ENCODE measurements at regions of chr2 and their contacts with region 1.

Region 1: GRCh38 chr2:73176881-73177644 is 25.3 kb upstream of the NOTO start:
- DNase-seq: no peak
- H3K4me3 ChIP-seq: peak overlapping the region; percentile 71
- CTCF ChIP-seq: peak; percentile 100

Region 2: DNA sequence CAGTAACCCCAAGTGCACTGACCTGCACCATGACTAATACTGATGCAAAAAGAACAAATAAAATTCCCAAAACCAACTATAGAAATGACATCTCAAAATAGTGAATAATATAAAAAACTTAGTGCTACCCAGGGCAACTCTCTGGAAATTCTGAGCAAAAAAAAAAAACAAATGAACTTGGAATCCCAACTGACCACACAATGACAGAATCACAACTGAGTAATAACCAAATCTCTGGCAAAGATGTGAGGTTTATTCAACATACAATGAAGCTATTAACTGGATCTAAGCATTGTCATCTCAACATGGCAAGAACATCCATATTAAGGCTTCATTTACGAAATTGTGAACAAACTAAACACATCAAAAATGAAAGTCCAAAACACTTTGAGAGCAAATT is 373.9 kb before region 1 on chr2:
- CTCF ChIA-PET with region 1: no interaction called
- POLR2A ChIA-PET with region 1: no interaction called
- DNase-seq: no peak
- H3K4me3 ChIP-seq: no peak overlapping the region
- CTCF ChIP-seq: no peak

Region 3: GRCh38 chr2:72924353-72925240 is 252.5 kb before region 1 on chr2:
- CTCF ChIA-PET with region 1: interaction called, 15 read pairs
- POLR2A ChIA-PET with region 1: no interaction called
- DNase-seq: no peak
- H3K4me3 ChIP-seq: no peak overlapping the region
- CTCF ChIP-seq: no peak

Region 4: DNA sequence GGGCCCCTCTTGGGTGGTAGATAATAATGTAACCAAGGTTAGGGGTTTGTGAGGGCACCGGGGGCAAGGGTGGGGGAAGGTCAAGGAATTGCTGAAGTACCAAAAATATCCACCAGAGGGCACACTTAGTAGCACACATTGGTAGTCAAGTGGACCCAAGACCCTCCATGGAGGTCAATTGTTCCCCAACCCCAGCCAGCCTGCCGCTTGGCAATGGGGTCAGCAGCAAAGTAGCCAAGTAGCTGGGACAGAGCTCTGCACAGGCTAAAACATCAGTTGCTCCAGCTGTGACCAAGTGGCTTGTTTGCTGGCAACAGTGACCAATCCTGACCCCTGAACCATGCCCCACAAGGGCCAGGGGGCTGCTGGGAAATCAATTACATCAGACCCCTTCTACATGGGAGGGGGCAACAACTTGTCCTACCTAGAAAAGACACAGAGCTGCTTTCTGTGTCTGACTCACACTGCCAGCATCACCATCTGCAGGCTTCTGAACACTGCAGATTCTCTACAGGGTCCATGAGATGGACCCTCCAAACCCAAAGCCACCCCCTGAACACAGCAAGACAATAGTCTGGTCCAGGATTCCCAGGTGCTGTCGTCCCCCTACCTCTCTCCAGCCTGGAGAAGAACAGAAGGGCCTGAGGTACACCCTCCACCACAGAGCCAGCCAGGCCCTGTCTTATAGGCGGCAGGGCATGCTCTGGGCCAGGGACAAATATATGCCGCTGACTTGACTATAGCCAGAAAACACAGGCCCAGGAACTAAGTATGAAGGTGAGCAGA is 183.7 kb before region 1 on chr2:
- CTCF ChIA-PET with region 1: interaction called, 51 read pairs
- POLR2A ChIA-PET with region 1: no interaction called
- DNase-seq: no peak
- H3K4me3 ChIP-seq: no peak overlapping the region
- CTCF ChIP-seq: peak; percentile 66

Region 5: GRCh38 chr2:73085691-73086360 is 91.2 kb before region 1 on chr2:
- CTCF ChIA-PET with region 1: interaction called, 50 read pairs
- POLR2A ChIA-PET with region 1: no interaction called
- DNase-seq: no peak
- H3K4me3 ChIP-seq: no peak overlapping the region; the same call in 1 of the 2 replicates
- CTCF ChIP-seq: peak; percentile 96

Region 6: DNA sequence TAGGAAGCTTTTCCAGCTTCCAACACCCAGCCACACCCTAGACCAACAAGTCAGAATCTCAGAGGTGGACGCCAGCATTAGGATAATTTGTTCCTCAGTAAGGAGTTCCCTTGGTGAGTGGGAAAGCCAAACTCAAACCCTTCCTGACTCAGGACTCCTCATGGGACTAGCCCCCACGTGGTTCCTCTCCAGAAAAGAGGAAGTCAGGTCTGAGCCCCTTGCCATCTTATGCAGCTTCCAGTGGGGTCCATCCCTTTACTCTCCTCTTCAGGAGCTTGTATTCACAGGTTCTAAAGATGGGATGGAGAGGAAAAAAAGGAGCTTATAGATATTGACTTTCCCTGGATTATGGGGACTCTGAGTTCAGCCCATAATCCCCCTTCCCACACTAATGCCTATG is 10.5 kb after region 1 on chr2:
- CTCF ChIA-PET with region 1: interaction called, 35 read pairs
- POLR2A ChIA-PET with region 1: interaction called, 3 read pairs
- DNase-seq: no peak
- H3K4me3 ChIP-seq: no peak overlapping the region
- CTCF ChIP-seq: no peak

Region 7: DNA sequence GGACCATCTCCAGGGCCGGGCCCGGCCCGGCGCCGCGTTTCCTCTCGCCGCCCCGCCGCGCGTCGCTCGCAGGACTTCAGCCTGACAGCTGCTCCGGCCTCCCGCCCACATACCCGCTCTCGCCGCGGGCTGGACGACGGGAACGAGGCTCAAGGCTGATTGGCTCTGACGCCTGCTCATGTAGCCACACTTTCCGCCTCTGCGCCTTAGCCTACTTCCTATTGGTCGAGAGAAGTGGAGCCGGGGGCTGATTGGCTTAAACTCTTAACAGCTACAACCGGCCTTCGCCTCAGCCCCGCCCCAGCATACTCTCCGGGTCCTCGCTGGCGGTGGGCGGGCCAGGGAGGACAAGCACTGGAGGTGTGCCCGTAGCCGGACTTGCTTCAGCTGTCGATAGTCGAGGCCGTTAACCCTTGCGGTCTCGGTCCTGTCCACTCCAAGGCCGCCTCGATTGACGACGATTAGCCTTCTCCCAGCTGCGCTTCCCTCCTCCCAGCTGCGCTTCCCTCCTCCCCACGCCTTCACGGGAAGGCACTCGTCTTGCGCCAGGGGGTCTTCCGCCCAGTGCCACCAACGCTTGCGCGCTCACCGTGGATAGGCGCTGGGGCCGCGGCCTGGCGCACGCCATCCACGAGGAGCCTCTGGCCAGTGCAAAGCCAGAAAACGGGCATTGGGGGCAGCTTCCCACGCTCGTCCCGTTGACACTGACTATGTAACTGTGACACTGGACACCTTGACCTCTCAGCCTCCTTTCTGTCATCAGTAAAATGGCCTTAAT is 56.3 kb after region 1 on chr2 and contains the start of gene PRADC1:
- CTCF ChIA-PET with region 1: interaction called, 14 read pairs
- POLR2A ChIA-PET with region 1: no interaction called
- DNase-seq: peak; percentile 97
- H3K4me3 ChIP-seq: peak within 1 kb of the TSS; percentile 93
- CTCF ChIP-seq: no peak

Measured in AG04449 (cell line).